ENCODE measurements at regions of chr12 and their contacts with region 1.

Region 1: GRCh38 chr12:56987551-56988053 is 18.7 kb downstream of the ZBTB39 start:
- DNase-seq: peak; percentile 62 to 67 (median 63)
- H3K4me3 ChIP-seq: no peak overlapping the region
- H3K4me3 Mint-ChIP-seq: peak overlapping the region in 3 of 8 donors; percentile 36 to 61 (median 56)
- H3K27ac ChIP-seq: no peak overlapping the region
- H3K27ac Mint-ChIP-seq: peak overlapping the region in 1 of 7 donors; percentile 53
- H3K4me1 ChIP-seq: peaks cover 19% of the 10 kb centered on the region
- H3K4me1 Mint-ChIP-seq: peaks cover 5 to 12% (median 11%) of the 10 kb centered on the region in 4 donors
- H3K27me3 ChIP-seq: no peaks in the 10 kb centered on the region
- H3K27me3 Mint-ChIP-seq: no peaks in the 10 kb centered on the region

Region 2: GRCh38 chr12:56601503-56601902 is 386.1 kb before region 1 on chr12:
- CTCF ChIA-PET with region 1: no interaction called
- POLR2A ChIA-PET with region 1: no interaction called
- intact Hi-C with region 1: loop called (anchors 2 kb)
- DNase-seq: peak in 2 of 5 donors; percentile 16 to 24
- H3K4me3 ChIP-seq: no peak overlapping the region
- H3K4me3 Mint-ChIP-seq: no peak overlapping the region
- H3K27ac ChIP-seq: no peak overlapping the region
- H3K27ac Mint-ChIP-seq: peak overlapping the region in 1 of 7 donors; percentile 62
- H3K4me1 ChIP-seq: no peaks in the 10 kb centered on the region
- H3K4me1 Mint-ChIP-seq: no peaks in the 10 kb centered on the region
- H3K27me3 ChIP-seq: no peaks in the 10 kb centered on the region
- H3K27me3 Mint-ChIP-seq: no peaks in the 10 kb centered on the region

Region 3: GRCh38 chr12:56763753-56764657 is 223.6 kb before region 1 on chr12:
- CTCF ChIA-PET with region 1: interaction called, 102 read pairs
- POLR2A ChIA-PET with region 1: no interaction called
- intact Hi-C with region 1: no loop called
- DNase-seq: no peak
- H3K4me3 ChIP-seq: no peak overlapping the region
- H3K4me3 Mint-ChIP-seq: no peak overlapping the region
- H3K27ac ChIP-seq: no peak overlapping the region
- H3K27ac Mint-ChIP-seq: no peak overlapping the region
- H3K4me1 ChIP-seq: no peaks in the 10 kb centered on the region
- H3K4me1 Mint-ChIP-seq: no peaks in the 10 kb centered on the region
- H3K27me3 ChIP-seq: no peaks in the 10 kb centered on the region
- H3K27me3 Mint-ChIP-seq: peaks cover 2% of the 10 kb centered on the region in 2 donors

Region 4: GRCh38 chr12:57005980-57006808 is 18.6 kb after region 1 on chr12 and contains the start of gene ZBTB39:
- CTCF ChIA-PET with region 1: interaction called, 51 read pairs
- POLR2A ChIA-PET with region 1: no interaction called
- intact Hi-C with region 1: no loop called
- DNase-seq: peak; percentile 50 to 76 (median 68)
- H3K4me3 ChIP-seq: peak within 1 kb of the TSS; percentile 44 to 60
- H3K4me3 Mint-ChIP-seq: peak within 1 kb of the TSS; percentile 90 to 98 (median 96)
- H3K27ac ChIP-seq: peak within 1 kb of the TSS; percentile 69
- H3K27ac Mint-ChIP-seq: peak within 1 kb of the TSS; percentile 83 to 96 (median 95)
- H3K4me1 ChIP-seq: peaks cover 52% of the 10 kb centered on the region
- H3K4me1 Mint-ChIP-seq: peaks cover 36 to 67% (median 52%) of the 10 kb centered on the region in 4 donors
- H3K27me3 ChIP-seq: no peaks in the 10 kb centered on the region
- H3K27me3 Mint-ChIP-seq: no peaks in the 10 kb centered on the region
- total RNA-seq, gene ZBTB39: 10.8 to 12.2 TPM

Measured in CD4-positive, alpha-beta memory T cell (primary cell).